ENCODE measurements at regions of chr11 and their contacts with region 1.

Region 1: GRCh38 chr11:131748151-131749050 is 378.0 kb downstream of the NTM start:
- DNase-seq: peak; percentile 51
- H3K4me3 Mint-ChIP-seq: no peak overlapping the region
- H3K27ac Mint-ChIP-seq: no peak overlapping the region
- H3K4me1 Mint-ChIP-seq: no peaks in the 10 kb centered on the region
- H3K27me3 Mint-ChIP-seq: peaks cover 9% of the 10 kb centered on the region

Region 2: GRCh38 chr11:131867457-131868257 is 119.3 kb after region 1 on chr11:
- CTCF ChIA-PET with region 1: no interaction called
- POLR2A ChIA-PET with region 1: no interaction called
- intact Hi-C with region 1: no loop called
- DNase-seq: peak; percentile 14
- H3K4me3 Mint-ChIP-seq: no peak overlapping the region
- H3K27ac Mint-ChIP-seq: no peak overlapping the region
- H3K4me1 Mint-ChIP-seq: no peaks in the 10 kb centered on the region
- H3K27me3 Mint-ChIP-seq: no peaks in the 10 kb centered on the region

Region 3: GRCh38 chr11:132941024-132941646 is 1192.7 kb after region 1 on chr11:
- CTCF ChIA-PET with region 1: interaction called, 12 read pairs
- POLR2A ChIA-PET with region 1: no interaction called
- intact Hi-C with region 1: no loop called
- DNase-seq: no peak
- H3K4me3 Mint-ChIP-seq: no peak overlapping the region
- H3K27ac Mint-ChIP-seq: no peak overlapping the region
- H3K4me1 Mint-ChIP-seq: peaks cover 3% of the 10 kb centered on the region
- H3K27me3 Mint-ChIP-seq: peaks cover 30% of the 10 kb centered on the region